Mammary epithelial cell (primary cell): ENCODE measurements at regions of chr15 and their contacts with region 1.

Region 1: GRCh38 chr15:91973481-91973880 is 120.0 kb downstream of the SLCO3A1 start:
- DNase-seq: peak; percentile 82
- H3K4me3 ChIP-seq: no peak overlapping the region
- H3K27ac ChIP-seq: peak overlapping the region; percentile 79
- H3K4me1 ChIP-seq: peaks cover 32% of the 10 kb centered on the region
- H3K27me3 ChIP-seq: no peaks in the 10 kb centered on the region
- CTCF ChIP-seq: peak; percentile 35 to 69

Region 2: DNA sequence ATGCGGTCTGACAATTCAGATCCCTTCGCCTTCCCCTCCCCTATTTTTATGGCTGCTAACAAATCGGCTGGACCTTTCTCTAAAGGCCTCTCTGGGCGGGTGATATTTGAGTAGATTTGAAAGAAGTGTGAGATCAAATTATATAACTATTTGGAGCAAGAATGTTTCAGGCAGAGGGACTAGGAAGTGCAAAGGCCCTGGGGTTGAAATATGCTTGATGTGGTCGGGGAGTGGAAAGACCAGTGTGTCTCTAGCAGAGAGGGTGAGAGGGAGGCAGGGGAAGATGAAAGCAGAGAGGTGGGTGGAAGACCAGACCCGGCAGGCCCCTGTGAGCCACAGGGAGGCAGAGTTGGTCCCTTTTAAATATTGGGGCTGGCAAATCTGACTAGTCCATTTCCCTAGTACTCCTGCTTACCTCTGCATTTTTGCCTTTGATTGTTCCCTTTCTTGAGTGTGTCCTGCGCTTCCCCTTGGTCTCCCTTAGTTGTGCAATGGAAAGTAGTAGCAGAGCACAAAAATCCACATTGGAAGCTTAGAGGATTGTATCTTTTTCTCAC is 87.7 kb before region 1 on chr15:
- CTCF ChIA-PET with region 1: interaction called, 3 read pairs
- dilution Hi-C with region 1: no loop called
- in situ Hi-C with region 1: no loop called
- intact Hi-C with region 1: loop called (anchors 2 kb)
- DNase-seq: no peak
- H3K4me3 ChIP-seq: no peak overlapping the region
- H3K27ac ChIP-seq: no peak overlapping the region
- H3K4me1 ChIP-seq: peaks cover 32% of the 10 kb centered on the region
- H3K27me3 ChIP-seq: no peaks in the 10 kb centered on the region
- CTCF ChIP-seq: peak in 1 of 2 donors; percentile 38

Region 3: DNA sequence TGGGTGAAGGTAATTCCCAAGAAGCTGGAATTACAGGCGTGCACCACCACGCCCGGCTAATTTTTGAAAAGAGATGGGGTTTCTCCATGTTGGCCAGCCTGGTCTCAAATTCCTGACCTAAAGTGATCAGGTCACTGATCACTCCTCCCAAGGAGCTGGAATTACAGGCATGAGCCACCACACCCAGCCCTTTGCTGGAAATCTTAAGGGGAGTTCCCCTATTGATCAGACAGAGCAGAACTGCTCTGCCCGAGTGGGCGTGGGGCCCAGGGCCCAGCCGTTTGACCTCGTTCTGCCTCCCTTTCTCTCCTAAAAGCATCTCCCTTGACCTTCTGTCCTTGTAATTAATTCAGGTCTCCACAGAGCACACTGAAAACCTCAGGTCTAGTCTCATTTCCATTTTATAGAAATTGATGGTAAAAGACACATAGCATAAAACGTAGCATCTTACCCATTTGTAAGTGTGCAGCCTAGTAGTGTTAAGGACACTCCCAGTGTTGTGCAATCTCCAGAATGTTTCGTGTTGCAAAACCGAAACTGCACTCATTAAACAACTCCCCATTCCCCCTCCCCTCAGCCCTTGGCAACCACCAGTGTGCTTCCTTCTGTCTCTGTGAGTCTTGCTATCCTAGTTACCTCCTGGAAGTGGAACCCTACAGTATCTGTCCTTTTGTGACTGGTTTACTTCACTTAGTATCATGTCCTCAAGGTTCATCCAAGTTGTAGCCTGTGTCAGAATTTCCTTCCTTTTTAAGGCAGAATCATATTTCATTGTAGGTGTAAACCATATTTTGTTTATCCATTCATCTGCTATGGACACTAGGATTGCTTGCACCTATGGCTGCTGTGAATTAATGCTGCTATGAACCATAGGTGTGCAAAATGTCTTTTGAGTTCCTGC is 30.6 kb before region 1 on chr15:
- CTCF ChIA-PET with region 1: no interaction called
- dilution Hi-C with region 1: no loop called
- in situ Hi-C with region 1: no loop called
- intact Hi-C with region 1: loop called (anchors 1 kb)
- DNase-seq: peak; percentile 99
- H3K4me3 ChIP-seq: peak overlapping the region in 1 of 3 experiments; percentile 5
- H3K27ac ChIP-seq: peak overlapping the region; percentile 96
- H3K4me1 ChIP-seq: peaks cover 58% of the 10 kb centered on the region
- H3K27me3 ChIP-seq: no peaks in the 10 kb centered on the region
- CTCF ChIP-seq: no peak

Region 4: GRCh38 chr15:91947683-91948608 is 25.5 kb before region 1 on chr15:
- CTCF ChIA-PET with region 1: interaction called, 6 read pairs
- dilution Hi-C with region 1: no loop called
- in situ Hi-C with region 1: no loop called
- intact Hi-C with region 1: loop called (anchors 1 kb)
- DNase-seq: peak; percentile 95
- H3K4me3 ChIP-seq: peak overlapping the region in 2 of 3 experiments; percentile 3 to 21
- H3K27ac ChIP-seq: peak overlapping the region; percentile 85
- H3K4me1 ChIP-seq: peaks cover 69% of the 10 kb centered on the region
- H3K27me3 ChIP-seq: no peaks in the 10 kb centered on the region
- CTCF ChIP-seq: no peak